ENCODE measurements at regions of chr2 and their contacts with region 1.

Region 1: GRCh38 chr2:104861351-104862057 is 7.6 kb downstream of the POU3F3 start:
- DNase-seq: no peak
- H3K4me3 ChIP-seq: peak overlapping the region in 2 of 3 donors; percentile 28 to 50
- H3K27ac ChIP-seq: no peak overlapping the region
- H3K4me1 ChIP-seq: no peaks in the 10 kb centered on the region
- H3K27me3 ChIP-seq: peaks cover 7 to 98% of the 10 kb centered on the region in 2 donors
- CTCF ChIP-seq: no peak
- POLR2A ChIP-seq: no peak

Region 2: GRCh38 chr2:103292573-103292972 is 1568.9 kb before region 1 on chr2:
- intact Hi-C with region 1: no loop called
- DNase-seq: no peak
- H3K4me3 ChIP-seq: no peak overlapping the region
- H3K27ac ChIP-seq: no peak overlapping the region
- H3K4me1 ChIP-seq: no peaks in the 10 kb centered on the region
- H3K27me3 ChIP-seq: no peaks in the 10 kb centered on the region
- CTCF ChIP-seq: no peak
- POLR2A ChIP-seq: no peak

Region 3: DNA sequence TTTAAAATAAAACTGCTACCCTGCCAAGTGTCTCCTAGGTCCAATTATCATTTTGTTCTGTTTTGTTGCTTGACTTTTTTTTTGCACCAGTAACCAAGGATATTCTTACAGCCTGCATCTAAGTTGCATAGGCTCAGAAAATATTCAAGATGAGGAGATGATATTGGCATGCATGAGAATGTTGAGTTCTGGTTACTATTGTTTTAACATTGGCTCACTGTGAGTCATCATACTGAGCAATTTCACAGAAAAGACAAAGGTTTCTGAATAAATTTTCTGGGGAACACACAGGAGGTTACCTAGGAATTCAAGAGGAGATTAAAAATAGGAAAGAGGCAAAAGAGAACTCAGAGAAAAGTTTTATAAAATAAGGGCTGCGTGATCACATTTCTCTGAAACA is 92.4 kb before region 1 on chr2:
- intact Hi-C with region 1: no loop called
- DNase-seq: no peak
- H3K4me3 ChIP-seq: no peak overlapping the region
- H3K27ac ChIP-seq: no peak overlapping the region
- H3K4me1 ChIP-seq: no peaks in the 10 kb centered on the region
- H3K27me3 ChIP-seq: no peaks in the 10 kb centered on the region
- CTCF ChIP-seq: no peak
- POLR2A ChIP-seq: no peak

Region 4: GRCh38 chr2:104872866-104873688 is 11.6 kb after region 1 on chr2:
- intact Hi-C with region 1: loop called (anchors 1 kb)
- DNase-seq: peak in 1 of 2 donors; percentile 53
- H3K4me3 ChIP-seq: peak overlapping the region; percentile 49 to 72 (median 59)
- H3K27ac ChIP-seq: peak overlapping the region; percentile 14 to 30
- H3K4me1 ChIP-seq: peaks cover 0 to 8% of the 10 kb centered on the region in 2 donors
- H3K27me3 ChIP-seq: peaks cover 0 to 56% of the 10 kb centered on the region in 2 donors
- CTCF ChIP-seq: peak in 2 of 3 donors; percentile 40 to 48
- POLR2A ChIP-seq: no peak

Measured in breast epithelium (tissue), 4 donors.